Panc1 (cell line): ENCODE measurements at regions of chr6 and their contacts with region 1.

Region 1: DNA sequence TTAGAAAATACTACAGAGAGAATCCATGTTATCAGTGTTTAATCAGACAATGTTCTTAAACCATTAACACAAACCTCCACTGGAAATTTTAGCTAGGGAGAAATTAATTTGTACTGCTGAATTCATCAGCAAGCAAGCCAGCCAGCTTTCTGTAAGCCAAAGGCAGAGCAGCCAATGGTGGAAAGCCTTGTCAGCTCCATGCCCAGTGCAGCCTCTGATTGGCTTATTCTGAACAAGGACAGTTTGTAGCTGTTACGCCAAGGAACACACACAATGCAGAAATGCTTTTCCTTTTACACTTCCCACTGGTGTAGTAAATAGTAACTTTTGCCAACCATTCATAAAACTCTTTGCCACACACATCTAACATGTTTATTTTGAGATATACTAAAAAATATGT is 265.0 kb downstream of the TENT5A start:
- DNase-seq: no peak
- ATAC-seq: no peak
- H3K4me3 ChIP-seq: no peak overlapping the region
- H3K27ac ChIP-seq: no peak overlapping the region
- H3K4me1 ChIP-seq: no peaks in the 10 kb centered on the region
- H3K27me3 ChIP-seq: no peaks in the 10 kb centered on the region; the same call in 1 of the 2 replicates
- CTCF ChIP-seq: no peak

Region 2: DNA sequence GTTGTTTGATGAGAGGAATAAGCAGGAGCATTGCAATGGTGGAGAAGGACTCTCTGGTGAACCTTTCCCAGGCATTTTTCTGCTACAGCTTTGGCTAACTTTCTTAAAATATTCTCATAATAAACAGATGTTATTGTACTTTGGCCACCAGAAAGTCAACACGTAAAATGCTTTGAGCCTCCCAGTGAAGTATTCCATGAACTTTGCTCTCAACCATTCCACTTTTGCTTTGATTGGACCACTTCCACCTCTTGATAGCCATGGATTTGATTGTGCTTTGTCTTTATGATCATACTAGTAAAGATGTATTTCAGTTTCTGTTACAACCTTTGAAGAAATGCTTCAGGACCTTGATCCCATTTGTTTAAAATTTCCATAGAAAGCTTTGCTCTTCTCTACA is 23.9 kb after region 1 on chr6:
- CTCF ChIA-PET with region 1: no interaction called
- POLR2A ChIA-PET with region 1: no interaction called
- in situ Hi-C with region 1: no loop called
- intact Hi-C with region 1: loop called (anchors 2 kb)
- DNase-seq: no peak
- ATAC-seq: no peak
- H3K4me3 ChIP-seq: no peak overlapping the region
- H3K27ac ChIP-seq: no peak overlapping the region
- H3K4me1 ChIP-seq: no peaks in the 10 kb centered on the region
- H3K27me3 ChIP-seq: no peaks in the 10 kb centered on the region
- CTCF ChIP-seq: no peak

Region 3: GRCh38 chr6:81562169-81562568 is 74.7 kb after region 1 on chr6:
- CTCF ChIA-PET with region 1: no interaction called
- POLR2A ChIA-PET with region 1: interaction called, 16 read pairs
- in situ Hi-C with region 1: no loop called
- intact Hi-C with region 1: no loop called
- DNase-seq: no peak
- ATAC-seq: no peak
- H3K4me3 ChIP-seq: no peak overlapping the region
- H3K27ac ChIP-seq: no peak overlapping the region
- H3K4me1 ChIP-seq: no peaks in the 10 kb centered on the region
- H3K27me3 ChIP-seq: no peaks in the 10 kb centered on the region
- CTCF ChIP-seq: no peak